Activated T-helper 1 cell treated with anti-CD3 and anti-CD28 coated beads, Interleukin-12 subunit alpha, Interleukin-12 subunit beta, Interleukin-2, Interleukin-4 antibody, amounts not matched to agents 30 ng/mL and 10 ng/mL and 1 ng/mL, durations not matched to agents 14 hours and 24 hours and 36 hours (primary cell): ENCODE measurements at regions of chr2 and their contacts with region 1.

Region 1: DNA sequence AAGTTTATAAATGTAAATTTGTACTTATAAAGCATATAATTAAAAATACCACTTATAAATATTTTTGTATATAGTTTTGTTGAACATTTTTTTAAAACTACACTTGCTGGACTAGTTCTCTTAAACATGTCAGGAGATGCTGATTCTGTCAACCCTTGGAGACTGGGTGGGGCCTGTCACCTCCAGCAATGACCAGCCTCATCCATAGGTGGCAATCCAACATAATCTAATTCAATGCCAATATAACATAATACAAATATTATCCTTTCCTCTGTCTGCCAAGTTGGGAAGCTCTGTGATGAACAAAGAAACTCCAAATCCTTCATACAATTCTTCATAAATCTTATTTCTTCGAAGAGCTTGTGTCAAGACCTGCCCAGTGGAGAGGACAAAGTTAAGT is 140.4 kb downstream of the RBMS1 start:
- DNase-seq: no peak
- H3K4me3 Mint-ChIP-seq: no peak overlapping the region
- H3K27ac Mint-ChIP-seq: no peak overlapping the region
- H3K4me1 Mint-ChIP-seq: peaks cover 32% of the 10 kb centered on the region
- H3K27me3 Mint-ChIP-seq: peaks cover 1% of the 10 kb centered on the region

Region 2: GRCh38 chr2:159615140-159615951 is 737.8 kb before region 1 on chr2:
- intact Hi-C with region 1: no loop called
- DNase-seq: peak; percentile 2
- H3K4me3 Mint-ChIP-seq: peak overlapping the region; percentile 83
- H3K27ac Mint-ChIP-seq: peak overlapping the region; percentile 21
- H3K4me1 Mint-ChIP-seq: peaks cover 18% of the 10 kb centered on the region
- H3K27me3 Mint-ChIP-seq: peaks cover 32% of the 10 kb centered on the region

Region 3: GRCh38 chr2:160022162-160022561 is 331.0 kb before region 1 on chr2:
- intact Hi-C with region 1: no loop called
- DNase-seq: no peak
- H3K4me3 Mint-ChIP-seq: no peak overlapping the region
- H3K27ac Mint-ChIP-seq: no peak overlapping the region
- H3K4me1 Mint-ChIP-seq: no peaks in the 10 kb centered on the region
- H3K27me3 Mint-ChIP-seq: peaks cover 4% of the 10 kb centered on the region

Region 4: DNA sequence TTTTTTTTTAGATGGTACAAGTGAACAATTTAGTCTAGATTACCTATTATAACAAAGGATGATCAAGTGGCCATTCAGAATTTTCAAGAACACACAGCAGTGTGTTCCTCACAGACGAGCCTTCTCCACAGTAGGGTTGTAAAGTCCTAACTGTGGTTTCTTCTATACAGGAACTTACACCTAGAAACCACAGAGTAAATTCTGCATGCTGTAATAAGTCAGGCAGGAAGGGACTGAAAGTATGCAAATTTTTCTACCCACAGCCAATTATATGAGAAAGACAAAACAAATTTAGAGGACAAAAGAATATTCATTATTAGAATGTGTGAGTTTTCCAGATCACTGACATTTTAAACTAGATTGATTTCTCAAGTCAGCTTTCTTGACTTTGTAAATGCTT is 41.0 kb after region 1 on chr2:
- intact Hi-C with region 1: loop called (anchors 5 kb)
- DNase-seq: no peak
- H3K4me3 Mint-ChIP-seq: peak overlapping the region; percentile 61
- H3K27ac Mint-ChIP-seq: peak overlapping the region; percentile 46
- H3K4me1 Mint-ChIP-seq: peaks cover 49% of the 10 kb centered on the region
- H3K27me3 Mint-ChIP-seq: no peaks in the 10 kb centered on the region

Region 5: DNA sequence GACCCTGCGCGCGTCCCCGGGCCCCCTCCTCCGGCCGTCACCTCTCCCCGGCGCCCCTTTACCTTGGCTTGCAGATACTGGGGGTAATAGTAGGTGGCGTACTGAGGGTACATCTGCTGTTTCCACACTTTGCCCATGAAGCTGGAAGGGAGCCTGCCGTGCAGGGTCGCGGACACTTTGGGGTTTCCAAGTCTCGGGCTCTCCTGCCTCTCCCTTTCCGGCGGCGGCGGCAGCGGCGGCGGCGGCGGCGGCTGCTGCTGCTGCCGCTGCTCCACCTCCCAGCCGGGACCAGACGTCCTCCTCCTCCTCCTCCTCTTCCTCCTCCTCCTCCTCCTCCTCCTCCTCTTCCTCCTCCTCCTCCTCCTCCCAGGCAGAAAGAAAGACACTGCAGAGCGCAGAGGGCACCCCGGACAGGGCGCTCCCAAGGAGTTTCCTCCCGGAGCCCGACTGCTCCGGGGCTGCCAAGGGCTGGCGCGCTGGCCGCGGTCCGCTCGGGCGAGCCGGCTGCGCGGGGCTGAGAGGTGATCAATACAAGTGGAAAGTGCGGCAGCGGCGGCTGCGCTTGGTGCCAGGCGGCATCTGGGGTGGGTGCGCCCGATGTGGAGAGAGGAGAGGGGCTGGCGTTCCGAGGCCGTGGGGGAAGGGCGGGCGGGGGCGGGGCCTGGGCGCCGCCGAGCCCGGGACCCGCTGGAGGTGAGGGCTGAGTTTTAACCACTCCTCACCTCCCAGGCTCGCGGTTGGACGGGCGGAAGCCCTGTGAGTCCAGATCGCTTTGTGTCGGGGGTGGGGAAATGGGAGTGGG is 140.3 kb after region 1 on chr2 and contains the start of gene RBMS1:
- intact Hi-C with region 1: no loop called
- DNase-seq: peak; percentile 35
- H3K4me3 Mint-ChIP-seq: peak within 1 kb of the TSS; percentile 97
- H3K27ac Mint-ChIP-seq: peak within 1 kb of the TSS; percentile 97
- H3K4me1 Mint-ChIP-seq: peaks cover 47% of the 10 kb centered on the region
- H3K27me3 Mint-ChIP-seq: peaks cover 9% of the 10 kb centered on the region
- total RNA-seq, gene RBMS1: 35.4 and 36.3 TPM in 2 replicates

Region 6: GRCh38 chr2:160970052-160970965 is 617.1 kb after region 1 on chr2:
- intact Hi-C with region 1: loop called (anchors 5 kb)
- DNase-seq: no peak
- H3K4me3 Mint-ChIP-seq: no peak overlapping the region
- H3K27ac Mint-ChIP-seq: no peak overlapping the region
- H3K4me1 Mint-ChIP-seq: no peaks in the 10 kb centered on the region
- H3K27me3 Mint-ChIP-seq: peaks cover 15% of the 10 kb centered on the region